Activated T-helper 2 cell treated with anti-CD3 and anti-CD28 coated beads, Interferon-gamma antibody, Interleukin-2, Interleukin-4, amounts not matched to agents 10 μg/mL and 5 μg/mL and 100 μg/mL, durations not matched to agents 14 hours and 24 hours and 36 hours (primary cell): ENCODE measurements at regions of chr1 and their contacts with region 1.

Region 1: DNA sequence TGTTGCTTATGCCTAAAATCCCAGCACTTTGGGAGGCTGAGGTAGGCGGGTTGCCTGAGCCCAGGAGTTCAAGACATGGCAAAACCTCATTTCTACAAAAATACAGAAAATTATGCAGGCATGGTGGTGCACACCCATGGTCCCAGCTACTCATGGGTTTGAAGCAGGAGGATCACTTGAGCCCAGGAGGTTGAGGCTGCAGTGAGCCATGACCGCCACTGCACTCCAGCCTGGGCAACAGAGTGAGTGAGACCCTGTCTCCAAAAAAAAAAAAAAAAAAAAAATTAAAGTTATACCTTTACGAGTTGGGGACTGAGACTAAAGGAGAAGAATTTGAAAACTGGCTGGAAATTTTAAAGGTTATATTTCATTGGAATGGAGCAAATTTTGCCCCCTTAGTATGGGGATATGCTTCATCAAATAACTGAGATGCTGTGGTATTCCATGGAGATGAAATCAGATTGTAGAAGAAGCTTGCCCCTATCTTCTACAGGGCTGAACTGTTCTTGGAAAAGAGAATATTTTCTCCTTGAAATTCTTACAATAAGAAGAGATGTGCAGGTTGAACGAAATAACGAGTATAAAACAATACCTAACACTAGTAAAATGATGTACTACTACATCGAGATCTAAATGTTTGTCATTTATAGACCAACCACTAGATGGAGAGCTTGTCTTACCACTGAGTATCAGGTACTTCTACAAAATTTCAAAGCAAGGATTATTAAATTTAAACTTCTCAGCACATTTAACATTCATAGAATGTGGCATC is 34.9 kb upstream of the SCYL3 start:
- DNase-seq: no peak
- H3K4me3 Mint-ChIP-seq: no peak overlapping the region
- H3K27ac Mint-ChIP-seq: no peak overlapping the region
- H3K4me1 Mint-ChIP-seq: peaks cover 13% of the 10 kb centered on the region
- H3K27me3 Mint-ChIP-seq: peaks cover 13% of the 10 kb centered on the region

Region 2: DNA sequence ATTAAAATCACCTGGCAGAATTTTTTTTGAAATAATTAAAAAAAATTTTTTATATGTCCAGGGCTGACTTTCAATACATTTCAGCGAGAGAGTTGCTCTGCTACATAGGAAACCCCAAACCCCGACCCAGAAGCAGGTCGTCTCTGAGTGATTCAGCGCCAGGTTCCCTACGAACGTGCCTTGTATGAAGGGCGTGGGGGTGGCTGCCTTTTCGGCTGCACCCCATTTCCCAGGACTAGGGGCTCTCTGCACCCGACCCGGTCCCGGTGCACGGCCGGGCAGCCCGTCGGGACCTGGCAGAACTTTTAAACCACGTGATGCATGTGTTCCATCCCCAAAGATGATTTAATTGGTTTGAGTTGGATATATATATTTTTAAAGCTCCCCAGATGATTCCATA is 19.1 kb before region 1 on chr1:
- intact Hi-C with region 1: loop called (anchors 2 kb)
- DNase-seq: no peak
- H3K4me3 Mint-ChIP-seq: no peak overlapping the region
- H3K27ac Mint-ChIP-seq: no peak overlapping the region
- H3K4me1 Mint-ChIP-seq: peaks cover 22% of the 10 kb centered on the region
- H3K27me3 Mint-ChIP-seq: no peaks in the 10 kb centered on the region

Region 3: GRCh38 chr1:170027760-170028159 is 99.1 kb after region 1 on chr1:
- intact Hi-C with region 1: no loop called
- DNase-seq: no peak
- H3K4me3 Mint-ChIP-seq: no peak overlapping the region
- H3K27ac Mint-ChIP-seq: no peak overlapping the region
- H3K4me1 Mint-ChIP-seq: peaks cover 5% of the 10 kb centered on the region
- H3K27me3 Mint-ChIP-seq: no peaks in the 10 kb centered on the region

Region 4: DNA sequence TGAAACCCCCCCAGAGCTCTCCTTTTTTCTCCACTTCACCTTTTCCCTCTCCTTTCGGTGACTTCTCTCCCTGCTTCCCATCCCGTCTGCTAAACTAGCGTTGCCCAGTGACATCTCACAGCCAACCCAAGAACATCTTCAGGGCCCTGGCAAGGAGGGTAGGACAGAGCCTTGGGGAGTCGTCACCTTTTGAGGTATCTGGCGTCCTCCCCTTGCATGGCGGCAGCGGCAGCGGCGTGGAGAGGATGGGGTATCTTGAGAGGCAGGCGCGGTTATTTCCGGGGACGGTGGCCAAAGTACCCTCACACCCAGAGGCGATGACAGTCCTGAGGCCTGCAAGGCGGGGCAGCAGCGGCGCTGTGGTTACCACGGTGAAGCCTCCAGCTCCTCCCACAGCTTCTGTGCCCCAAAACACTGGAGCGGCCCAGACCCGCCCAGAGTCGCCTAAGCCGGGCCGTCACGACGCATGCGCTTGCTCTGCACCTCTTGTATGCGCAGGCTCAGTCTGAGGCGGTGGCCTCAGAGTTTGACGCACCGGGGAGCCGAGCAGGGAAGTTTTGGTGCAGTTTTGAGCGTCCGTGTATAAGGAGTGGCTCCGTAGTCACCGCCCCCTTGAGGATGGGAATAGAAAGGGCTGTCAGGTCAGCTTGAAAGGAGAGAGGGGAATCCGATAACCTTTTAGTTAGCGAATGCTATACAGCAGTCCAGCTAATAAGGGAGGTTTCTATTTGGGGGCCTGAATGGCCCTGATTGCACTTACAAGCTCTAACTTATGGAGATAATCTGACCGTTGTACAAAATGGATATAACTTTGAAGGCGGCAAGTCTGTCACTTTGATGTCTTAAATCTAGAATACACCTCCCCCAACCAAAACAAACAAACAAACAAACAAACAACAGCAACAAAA is 145.9 kb after region 1 on chr1 and contains the start of gene KIFAP3:
- intact Hi-C with region 1: loop called (anchors 2 kb)
- DNase-seq: peak; percentile 96
- H3K4me3 Mint-ChIP-seq: peak within 1 kb of the TSS; percentile 96
- H3K27ac Mint-ChIP-seq: peak within 1 kb of the TSS; percentile 94
- H3K4me1 Mint-ChIP-seq: peaks cover 28% of the 10 kb centered on the region
- H3K27me3 Mint-ChIP-seq: no peaks in the 10 kb centered on the region
- total RNA-seq, gene KIFAP3: 15.1 and 15.5 TPM in 2 replicates

Region 5: DNA sequence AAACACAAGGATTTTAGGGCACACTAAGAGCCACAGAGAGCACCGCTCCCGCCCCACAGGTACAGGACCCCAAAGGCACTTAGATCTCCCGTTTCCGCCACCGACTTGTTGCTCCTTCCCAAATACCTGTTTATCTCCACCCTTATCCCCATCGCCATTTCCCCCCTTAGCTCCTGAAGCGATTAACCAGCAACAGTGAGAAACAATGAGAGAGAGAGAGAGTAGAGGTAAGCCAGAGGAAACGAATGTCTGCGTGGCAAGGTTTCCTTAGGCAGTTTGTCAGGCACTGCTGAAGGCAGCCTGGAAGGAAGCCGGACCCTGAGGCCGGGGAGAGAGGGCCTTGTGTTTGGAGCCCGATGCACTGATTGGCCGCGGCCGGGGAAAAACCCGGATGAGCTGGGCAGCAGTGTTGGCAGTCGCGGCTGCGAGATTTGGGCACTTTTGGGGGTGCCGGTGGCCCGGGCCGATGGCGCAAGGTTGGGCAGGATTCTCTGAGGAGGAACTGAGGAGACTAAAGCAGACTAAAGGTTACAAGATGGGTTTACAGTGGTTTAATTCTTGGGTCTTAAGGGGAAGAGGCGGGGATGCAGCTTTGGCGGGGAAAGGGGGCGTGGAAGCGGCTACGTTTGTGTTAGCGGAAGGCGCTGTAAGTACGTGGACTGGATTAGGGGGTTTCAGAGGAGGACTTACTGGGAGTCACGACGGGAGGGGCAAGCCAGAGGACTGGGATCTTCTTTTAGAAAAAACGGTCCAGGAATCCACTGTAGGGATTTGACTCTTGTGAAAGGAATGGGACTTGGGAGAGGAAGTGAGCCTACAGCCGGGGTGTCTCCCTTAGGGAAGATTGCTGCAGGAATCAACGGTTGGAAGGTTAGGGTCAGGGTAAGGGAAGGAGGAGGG is 603.4 kb after region 1 on chr1 and contains the start of gene GORAB:
- intact Hi-C with region 1: loop called (anchors 5 kb)
- DNase-seq: peak; percentile 84
- H3K4me3 Mint-ChIP-seq: no peak within 1 kb of the TSS
- H3K27ac Mint-ChIP-seq: no peak within 1 kb of the TSS
- H3K4me1 Mint-ChIP-seq: peaks cover 6% of the 10 kb centered on the region
- H3K27me3 Mint-ChIP-seq: peaks cover 12% of the 10 kb centered on the region
- total RNA-seq, gene GORAB: 10.1 and 12.3 TPM in 2 replicates